ENCODE measurements at regions of chr3 and their contacts with region 1.

Region 1: DNA sequence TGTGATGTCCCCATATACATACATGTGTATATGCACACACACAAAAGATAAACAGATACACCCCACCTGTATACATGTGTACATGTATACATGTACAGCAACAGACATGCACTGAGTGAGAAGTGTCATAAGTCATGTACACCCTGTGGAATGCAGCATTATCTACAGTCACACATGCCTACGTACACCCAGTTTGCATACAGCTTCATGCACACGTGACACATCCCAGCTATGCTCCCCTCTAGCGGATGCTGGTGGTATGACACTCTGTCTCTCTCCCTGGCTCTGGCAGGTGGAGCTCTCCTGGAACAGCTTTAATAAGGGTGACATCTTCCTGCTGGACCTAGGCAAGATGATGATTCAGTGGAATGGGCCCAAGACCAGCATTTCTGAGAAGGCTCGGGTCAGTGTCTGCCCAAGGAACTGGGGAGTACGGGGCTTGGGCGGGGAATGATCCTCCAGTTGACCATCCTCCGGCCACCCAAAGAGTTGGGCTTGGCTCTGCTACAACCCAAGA is 6.3 kb downstream of the VILL start:
- DNase-seq: peak; percentile 88
- ATAC-seq: peak; percentile 44
- H3K4me3 Mint-ChIP-seq: no peak overlapping the region
- H3K27ac Mint-ChIP-seq: peak overlapping the region; percentile 93
- H3K4me1 Mint-ChIP-seq: peaks cover 58% of the 10 kb centered on the region
- H3K27me3 Mint-ChIP-seq: peaks cover 3% of the 10 kb centered on the region

Region 2: GRCh38 chr3:37979541-37980461 is 17.0 kb before region 1 on chr3:
- CTCF ChIA-PET with region 1: interaction called, 36 read pairs
- POLR2A ChIA-PET with region 1: interaction called, 3 read pairs
- DNase-seq: no peak
- ATAC-seq: no peak
- H3K4me3 Mint-ChIP-seq: no peak overlapping the region
- H3K27ac Mint-ChIP-seq: no peak overlapping the region
- H3K4me1 Mint-ChIP-seq: peaks cover 3% of the 10 kb centered on the region
- H3K27me3 Mint-ChIP-seq: peaks cover 9% of the 10 kb centered on the region

Region 3: GRCh38 chr3:38039101-38039898 is 42.5 kb after region 1 on chr3 and contains the start of gene DLEC1:
- CTCF ChIA-PET with region 1: interaction called, 10 read pairs
- POLR2A ChIA-PET with region 1: interaction called, 3 read pairs
- DNase-seq: peak; percentile 95
- ATAC-seq: peak; percentile 78
- H3K4me3 Mint-ChIP-seq: peak within 1 kb of the TSS; percentile 80
- H3K27ac Mint-ChIP-seq: peak within 1 kb of the TSS; percentile 96
- H3K4me1 Mint-ChIP-seq: peaks cover 38% of the 10 kb centered on the region
- H3K27me3 Mint-ChIP-seq: peaks cover 8% of the 10 kb centered on the region
- total RNA-seq, gene DLEC1: 0.26 to 0.60 TPM

Region 4: DNA sequence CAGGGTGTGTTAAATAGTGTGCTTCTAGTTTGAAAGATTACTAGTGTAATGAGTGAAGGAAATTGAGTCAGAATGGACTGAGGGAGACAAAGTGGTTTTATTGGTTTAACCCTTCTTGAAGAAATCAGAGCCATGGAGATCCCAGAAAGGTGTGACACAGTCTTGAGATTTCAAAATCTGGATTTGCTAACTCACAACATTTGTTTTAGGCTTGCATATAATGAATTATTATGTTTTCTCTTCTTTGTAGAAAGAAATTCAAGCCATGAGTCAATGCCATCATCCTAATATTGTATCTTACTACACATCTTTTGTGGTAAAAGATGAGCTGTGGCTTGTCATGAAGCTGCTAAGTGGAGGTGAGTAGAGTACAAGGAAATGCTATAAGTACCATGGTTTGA is 193.6 kb after region 1 on chr3:
- CTCF ChIA-PET with region 1: no interaction called
- POLR2A ChIA-PET with region 1: no interaction called
- DNase-seq: no peak
- ATAC-seq: no peak
- H3K4me3 Mint-ChIP-seq: no peak overlapping the region
- H3K27ac Mint-ChIP-seq: peak overlapping the region; percentile 58
- H3K4me1 Mint-ChIP-seq: no peaks in the 10 kb centered on the region
- H3K27me3 Mint-ChIP-seq: no peaks in the 10 kb centered on the region